A549 (cell line): ENCODE measurements at regions of chr5 and their contacts with region 1.

Region 1: GRCh38 chr5:149990518-149991376 is 9.7 kb downstream of the TIGD6 start:
- DNase-seq: peak; percentile 81 to 82
- ATAC-seq: peak; percentile 87 to 93
- H3K4me3 ChIP-seq: no peak overlapping the region
- H3K27ac ChIP-seq: no peak overlapping the region
- H3K4me1 ChIP-seq: no peaks in the 10 kb centered on the region
- CTCF ChIP-seq: peak; percentile 98
- EP300 ChIP-seq: no peak
- POLR2A ChIP-seq: no peak
- RAD21 ChIP-seq: peak; percentile 93 to 99

Region 2: GRCh38 chr5:149636851-149637246 is 353.9 kb before region 1 on chr5:
- CTCF ChIA-PET with region 1: interaction called, 16 read pairs
- POLR2A ChIA-PET with region 1: no interaction called
- DNase-seq: peak; percentile 70 to 72
- ATAC-seq: peak; percentile 79 to 93
- H3K4me3 ChIP-seq: no peak overlapping the region
- H3K27ac ChIP-seq: no peak overlapping the region
- H3K4me1 ChIP-seq: peaks cover 10% of the 10 kb centered on the region; the same call in 2 of the 3 replicates
- CTCF ChIP-seq: peak; percentile 92
- EP300 ChIP-seq: no peak
- POLR2A ChIP-seq: no peak
- RAD21 ChIP-seq: peak; percentile 95 to 96

Region 3: DNA sequence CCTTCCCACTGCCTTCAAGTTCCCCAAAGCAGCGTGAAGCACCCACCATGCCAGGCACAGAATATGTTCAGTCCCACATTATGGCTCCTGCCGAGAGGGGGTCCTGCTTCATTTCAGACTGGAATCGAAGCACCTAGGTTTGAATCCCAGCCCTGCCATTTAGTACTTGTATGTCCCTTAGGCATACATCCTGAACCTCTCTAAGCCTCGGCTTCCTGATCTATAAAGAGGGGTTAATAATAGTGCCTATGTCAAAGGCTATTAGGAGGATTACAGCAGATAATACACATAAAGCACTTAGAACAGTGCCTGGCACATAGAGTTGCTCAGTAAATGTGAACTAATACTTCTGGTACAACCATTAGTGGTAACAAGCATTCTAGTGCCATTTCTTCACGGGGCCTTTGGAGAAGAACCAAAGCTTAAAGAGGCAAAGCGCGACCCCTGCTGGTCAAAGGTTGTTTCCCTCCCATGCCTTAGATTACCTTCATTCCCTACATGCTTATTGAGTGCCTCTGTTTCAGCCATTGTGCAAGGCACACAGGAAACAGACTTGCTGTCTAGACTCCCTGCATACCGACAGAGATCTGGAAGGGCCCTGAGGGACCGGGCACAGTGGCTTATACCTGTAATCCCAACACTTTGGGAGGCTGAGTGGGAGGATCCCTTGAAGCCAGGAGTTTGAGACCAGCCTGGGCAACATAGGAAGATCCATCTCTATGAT is 162.4 kb before region 1 on chr5:
- CTCF ChIA-PET with region 1: interaction called, 507 read pairs
- POLR2A ChIA-PET with region 1: no interaction called
- DNase-seq: peak; percentile 91 to 96
- ATAC-seq: peak; percentile 89 to 94
- H3K4me3 ChIP-seq: no peak overlapping the region
- H3K27ac ChIP-seq: peak overlapping the region; percentile 29 to 67; a peak in 4 of 6 replicates
- H3K4me1 ChIP-seq: peaks cover 5% of the 10 kb centered on the region; the same call in 1 of the 3 replicates
- CTCF ChIP-seq: peak; percentile 97
- EP300 ChIP-seq: no peak
- POLR2A ChIP-seq: no peak
- RAD21 ChIP-seq: peak; percentile 97

Region 4: GRCh38 chr5:149847611-149848010 is 143.1 kb before region 1 on chr5:
- CTCF ChIA-PET with region 1: interaction called, 72 read pairs
- POLR2A ChIA-PET with region 1: no interaction called
- DNase-seq: no peak
- ATAC-seq: no peak
- H3K4me3 ChIP-seq: no peak overlapping the region
- H3K27ac ChIP-seq: no peak overlapping the region
- H3K4me1 ChIP-seq: no peaks in the 10 kb centered on the region
- CTCF ChIP-seq: no peak
- EP300 ChIP-seq: no peak
- POLR2A ChIP-seq: no peak
- RAD21 ChIP-seq: no peak

Region 5: DNA sequence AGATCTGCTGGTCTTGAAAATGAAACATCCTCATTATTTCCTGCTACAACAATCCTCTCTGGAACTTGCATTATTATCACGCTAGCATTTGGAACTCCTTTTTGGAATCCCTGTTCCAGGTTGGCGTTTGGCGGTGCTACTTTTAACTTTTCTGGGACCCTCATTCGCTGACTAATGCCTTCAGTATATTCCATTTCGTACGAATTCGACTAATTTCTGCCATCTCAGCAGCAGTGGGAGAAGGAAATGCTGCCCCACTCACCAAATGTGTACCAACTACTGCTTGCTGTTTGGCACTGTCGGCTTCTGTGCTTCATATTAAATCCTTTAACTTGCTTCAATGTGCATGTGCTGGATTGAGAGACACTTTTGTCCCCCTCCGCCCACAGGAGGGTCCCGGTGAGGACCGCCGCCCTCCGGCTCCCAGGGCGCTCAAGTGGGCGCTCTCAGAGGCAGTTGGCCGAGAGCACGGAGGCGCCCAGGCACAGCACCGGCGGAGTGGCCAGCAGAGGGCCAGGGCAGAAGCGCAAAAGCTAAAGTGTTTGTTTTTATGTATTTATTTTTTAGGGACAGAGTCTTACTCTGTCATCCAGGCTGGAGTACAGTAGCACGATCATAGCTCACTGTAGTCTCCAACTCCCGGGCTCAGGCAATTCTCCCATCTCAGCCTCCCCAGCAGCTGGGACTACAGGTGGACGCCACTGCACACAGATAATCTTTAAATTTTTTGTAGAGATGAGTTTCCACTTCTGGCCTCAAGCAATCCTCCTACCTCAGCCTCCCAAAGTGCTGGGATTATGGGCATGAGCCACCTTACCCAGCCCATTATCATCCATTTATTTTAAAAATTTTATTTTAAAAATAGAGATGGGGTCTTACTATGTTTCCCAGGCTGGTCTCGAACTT is 58.0 kb before region 1 on chr5:
- CTCF ChIA-PET with region 1: interaction called, 21 read pairs
- POLR2A ChIA-PET with region 1: no interaction called
- DNase-seq: peak; percentile 54 to 69
- ATAC-seq: peak; percentile 95
- H3K4me3 ChIP-seq: peak overlapping the region; percentile 41
- H3K27ac ChIP-seq: peak overlapping the region; percentile 88 to 92
- H3K4me1 ChIP-seq: peaks cover 47% of the 10 kb centered on the region
- CTCF ChIP-seq: peak; percentile 78
- EP300 ChIP-seq: no peak
- POLR2A ChIP-seq: no peak
- RAD21 ChIP-seq: peak; percentile 61 to 72

Region 6: GRCh38 chr5:149979896-149980295 is 10.9 kb before region 1 on chr5:
- CTCF ChIA-PET with region 1: interaction called, 31 read pairs
- POLR2A ChIA-PET with region 1: no interaction called
- DNase-seq: no peak
- ATAC-seq: no peak
- H3K4me3 ChIP-seq: no peak overlapping the region
- H3K27ac ChIP-seq: no peak overlapping the region
- H3K4me1 ChIP-seq: peaks cover 10% of the 10 kb centered on the region; the same call in 1 of the 3 replicates
- CTCF ChIP-seq: no peak
- EP300 ChIP-seq: no peak
- POLR2A ChIP-seq: no peak
- RAD21 ChIP-seq: no peak

Region 7: DNA sequence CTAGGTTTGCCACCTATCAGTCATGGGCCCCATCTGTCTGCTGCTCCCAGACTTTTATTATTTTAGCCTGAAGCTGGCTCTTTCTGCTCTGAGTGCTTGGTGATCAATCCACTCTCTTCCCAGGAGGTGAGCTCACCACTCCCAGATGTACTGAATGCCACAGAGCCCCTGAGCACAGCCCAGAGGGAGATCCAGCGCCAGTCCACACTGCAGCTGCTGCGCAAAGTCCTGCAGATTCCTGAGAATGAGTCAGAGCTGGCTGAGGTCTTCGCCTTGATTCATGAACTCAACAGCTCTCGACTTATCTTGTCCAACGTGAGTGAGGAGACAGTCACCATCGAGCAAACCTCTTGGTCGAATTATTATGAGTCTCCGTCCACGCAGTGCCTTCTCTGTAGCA is 45.8 kb after region 1 on chr5:
- CTCF ChIA-PET with region 1: interaction called, 11 read pairs
- POLR2A ChIA-PET with region 1: no interaction called
- DNase-seq: peak; percentile 58 to 73
- ATAC-seq: peak; percentile 98 to 99
- H3K4me3 ChIP-seq: no peak overlapping the region
- H3K27ac ChIP-seq: peak overlapping the region in 1 of 2 experiments; percentile 59; a peak in 2 of 6 replicates
- H3K4me1 ChIP-seq: peaks cover 19% of the 10 kb centered on the region
- CTCF ChIP-seq: no peak
- EP300 ChIP-seq: no peak
- POLR2A ChIP-seq: no peak
- RAD21 ChIP-seq: no peak

Region 8: DNA sequence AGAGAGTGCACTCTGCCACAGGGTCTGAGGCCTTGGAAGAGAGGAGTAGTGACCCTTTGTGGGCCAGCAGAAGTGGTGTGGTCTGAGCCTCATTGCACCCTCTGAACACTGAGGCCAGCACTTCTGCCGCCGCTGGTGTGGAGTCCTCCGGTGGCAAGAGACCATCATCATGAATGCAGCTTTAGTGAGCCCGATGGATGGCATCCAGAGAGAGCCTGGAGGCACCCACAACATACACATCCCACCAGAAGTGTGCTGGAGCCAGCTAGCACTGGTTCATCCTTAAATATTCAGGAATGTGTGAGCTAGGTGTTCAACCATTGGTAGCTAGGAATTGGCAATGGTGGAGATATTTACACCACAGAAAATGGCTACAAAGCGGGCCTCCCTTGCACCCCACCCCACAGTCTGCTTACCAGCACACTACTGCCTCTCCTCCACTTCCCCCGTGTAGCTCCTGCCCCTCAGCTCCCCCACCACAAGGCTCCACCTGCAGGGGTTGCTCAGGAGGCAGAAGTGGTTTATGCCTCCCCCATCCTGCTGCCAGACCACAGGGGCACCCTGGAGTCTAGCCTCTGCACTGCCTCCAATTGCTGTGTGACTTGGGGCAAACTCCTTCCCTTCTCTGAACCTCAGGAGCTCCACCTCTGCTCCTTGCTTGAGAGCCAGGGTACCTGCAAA is 215.5 kb after region 1 on chr5:
- CTCF ChIA-PET with region 1: no interaction called
- POLR2A ChIA-PET with region 1: no interaction called
- DNase-seq: no peak
- ATAC-seq: no peak
- H3K4me3 ChIP-seq: no peak overlapping the region
- H3K27ac ChIP-seq: no peak overlapping the region
- H3K4me1 ChIP-seq: peaks cover 7% of the 10 kb centered on the region; the same call in 1 of the 3 replicates
- CTCF ChIP-seq: no peak
- EP300 ChIP-seq: no peak
- POLR2A ChIP-seq: no peak
- RAD21 ChIP-seq: no peak